KBM-7 (cell line): ENCODE measurements at regions of chr6 and their contacts with region 1.

Region 1: DNA sequence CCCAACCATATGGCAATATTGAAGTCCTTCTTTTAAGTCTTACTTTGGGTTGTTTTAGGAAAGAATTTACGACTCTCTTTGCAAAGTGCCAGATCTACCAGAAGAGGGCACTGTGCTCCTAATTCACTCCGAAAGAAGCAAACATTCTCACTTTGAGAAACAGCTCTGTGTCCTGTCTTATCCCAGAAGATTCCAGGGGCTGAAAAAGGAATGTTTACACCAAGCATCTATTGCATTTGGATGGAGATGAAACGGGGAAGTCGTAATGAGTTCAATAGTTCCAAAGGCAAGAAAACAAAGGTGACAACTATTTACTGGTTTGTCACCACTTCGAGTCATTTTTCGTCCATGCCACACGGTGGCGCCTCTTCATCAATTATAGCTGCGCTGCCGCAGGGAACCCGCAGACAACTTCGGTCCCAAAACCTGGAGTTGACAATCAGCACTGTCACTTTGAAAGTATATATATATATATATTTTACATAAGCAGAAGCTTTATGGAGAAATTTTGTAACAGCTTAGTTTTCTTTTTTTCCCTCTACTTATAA is 121.6 kb downstream of the MOXD1 start:
- DNase-seq: peak; percentile 83

Region 2: DNA sequence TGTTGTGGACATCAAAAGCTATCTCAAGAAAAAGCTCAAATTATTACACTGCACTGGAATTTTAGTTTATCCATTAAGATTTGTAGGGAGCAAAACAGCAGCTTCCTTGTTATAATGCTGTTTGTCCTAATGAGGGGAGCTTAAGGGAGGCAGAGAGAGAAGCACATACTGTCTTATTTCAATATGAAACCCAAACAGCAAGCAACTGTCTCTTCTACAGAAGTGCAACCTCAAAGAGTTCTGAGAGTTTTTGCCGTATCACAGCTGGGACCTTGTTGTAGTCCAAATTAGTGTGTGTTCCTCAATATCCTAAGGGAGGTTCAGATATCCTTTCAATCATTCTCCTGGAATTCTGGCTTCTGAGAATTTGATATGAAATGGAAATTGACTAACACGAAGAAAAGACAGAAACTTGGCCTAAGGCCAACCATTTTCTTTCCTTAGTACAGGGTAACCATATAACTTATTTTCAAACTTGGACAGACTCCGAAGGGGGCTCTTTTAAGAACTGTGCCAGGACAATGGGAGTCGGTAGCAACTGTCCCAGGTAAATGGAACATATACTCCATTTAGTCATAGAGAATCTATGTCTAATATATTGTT is 179.2 kb before region 1 on chr6:
- in situ Hi-C with region 1: no loop called
- DNase-seq: no peak

Region 3: DNA sequence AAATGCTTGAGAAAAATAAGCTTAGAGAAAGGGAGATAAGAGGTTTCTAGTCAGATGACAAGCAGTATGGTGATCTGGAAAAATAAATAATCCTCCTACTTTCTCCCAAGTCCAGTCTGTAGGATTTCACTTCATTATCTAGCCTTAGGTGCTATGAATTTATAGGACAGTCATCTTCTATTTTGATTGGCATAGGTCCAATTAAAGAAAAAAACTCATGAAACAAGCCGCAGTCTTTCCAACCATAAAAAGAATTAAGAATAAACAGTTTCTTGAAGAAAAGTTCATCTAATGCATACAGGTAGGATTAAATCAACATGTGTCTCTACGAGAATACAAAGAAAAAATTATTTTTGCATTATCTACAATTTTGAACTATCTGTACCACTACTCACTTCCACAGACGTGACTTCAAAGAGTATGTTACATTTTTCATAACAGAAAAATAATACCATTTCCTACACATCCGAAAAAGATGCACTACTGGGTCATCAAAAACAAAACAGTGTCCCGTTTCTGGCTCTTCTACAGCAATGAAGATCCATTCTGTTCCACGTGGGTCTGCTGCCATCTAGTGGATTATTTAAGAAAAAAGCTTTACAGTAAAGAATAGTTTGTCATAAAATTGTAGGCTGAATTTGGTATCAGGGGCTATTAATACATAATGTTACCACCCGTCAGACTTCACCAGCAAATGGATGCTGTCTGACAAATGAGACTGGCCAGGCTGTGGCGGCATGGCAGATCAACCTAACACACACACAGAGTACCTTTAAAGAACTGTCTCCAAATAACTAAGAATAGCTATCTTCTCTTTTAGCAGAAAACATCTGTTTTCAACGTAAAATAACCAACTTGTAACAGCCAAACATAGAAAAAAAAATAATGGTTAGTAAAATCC is 204.4 kb after region 1 on chr6:
- in situ Hi-C with region 1: loop called (anchors 25 kb)
- DNase-seq: peak; percentile 62